Naive thymus-derived CD4-positive, alpha-beta T cell (primary cell): ENCODE measurements at regions of chr22 and their contacts with region 1.

Region 1: GRCh38 chr22:35627264-35628041 is 10.3 kb upstream of the MB start:
- DNase-seq: peak in 5 of 9 donors; percentile 14 to 49 (median 34)
- ATAC-seq: peak; percentile 42
- H3K4me3 ChIP-seq: peak overlapping the region; percentile 55
- H3K4me3 Mint-ChIP-seq: peak overlapping the region; percentile 53 to 86 (median 73)
- H3K27ac ChIP-seq: no peak overlapping the region
- H3K27ac Mint-ChIP-seq: peak overlapping the region in 7 of 9 donors; percentile 28 to 93 (median 64)
- H3K4me1 ChIP-seq: peaks cover 0 to 10% of the 10 kb centered on the region in 2 donors
- H3K4me1 Mint-ChIP-seq: peaks cover 8 to 30% (median 28%) of the 10 kb centered on the region in 7 donors
- H3K27me3 ChIP-seq: no peaks in the 10 kb centered on the region
- H3K27me3 Mint-ChIP-seq: peaks cover 0 to 14% (median 8%) of the 10 kb centered on the region in 5 donors

Region 2: DNA sequence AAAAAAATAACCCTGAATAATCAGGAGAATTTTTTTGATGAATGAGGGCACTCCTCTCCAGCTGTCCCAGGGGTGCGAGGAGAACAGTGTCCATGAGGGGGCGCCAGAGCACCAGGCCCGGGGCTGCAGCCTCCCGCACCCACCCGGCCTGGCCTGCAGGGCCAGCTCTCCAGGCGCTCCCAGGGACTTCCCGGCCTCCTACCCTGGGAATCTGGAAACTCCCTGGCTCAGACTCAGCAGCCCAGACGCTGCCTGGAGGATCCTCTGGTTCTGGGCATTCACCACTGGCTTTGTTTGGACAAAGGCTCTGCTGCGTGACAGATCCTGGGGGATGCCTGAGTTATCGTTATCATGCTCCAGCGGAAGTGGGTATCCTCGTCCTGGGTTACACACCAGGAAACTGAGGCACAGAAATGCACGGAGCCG is 196.5 kb before region 1 on chr22:
- CTCF ChIA-PET with region 1: no interaction called
- POLR2A ChIA-PET with region 1: no interaction called
- intact Hi-C with region 1: loop called (anchors 1 to 2 kb)
- DNase-seq: peak; percentile 30 to 74 (median 59)
- ATAC-seq: peak; percentile 83
- H3K4me3 ChIP-seq: no peak overlapping the region
- H3K4me3 Mint-ChIP-seq: no peak overlapping the region
- H3K27ac ChIP-seq: no peak overlapping the region
- H3K27ac Mint-ChIP-seq: no peak overlapping the region
- H3K4me1 ChIP-seq: no peaks in the 10 kb centered on the region
- H3K4me1 Mint-ChIP-seq: peaks cover 0 to 3% (median 0%) of the 10 kb centered on the region in 7 donors
- H3K27me3 ChIP-seq: no peaks in the 10 kb centered on the region
- H3K27me3 Mint-ChIP-seq: no peaks in the 10 kb centered on the region

Region 3: GRCh38 chr22:35697142-35697541 is 69.7 kb after region 1 on chr22:
- CTCF ChIA-PET with region 1: no interaction called
- POLR2A ChIA-PET with region 1: no interaction called
- intact Hi-C with region 1: no loop called
- DNase-seq: peak in 6 of 9 donors; percentile 19 to 61 (median 30)
- ATAC-seq: no peak
- H3K4me3 ChIP-seq: no peak overlapping the region
- H3K4me3 Mint-ChIP-seq: no peak overlapping the region
- H3K27ac ChIP-seq: no peak overlapping the region
- H3K27ac Mint-ChIP-seq: no peak overlapping the region
- H3K4me1 ChIP-seq: no peaks in the 10 kb centered on the region
- H3K4me1 Mint-ChIP-seq: no peaks in the 10 kb centered on the region
- H3K27me3 ChIP-seq: no peaks in the 10 kb centered on the region
- H3K27me3 Mint-ChIP-seq: no peaks in the 10 kb centered on the region

Region 4: DNA sequence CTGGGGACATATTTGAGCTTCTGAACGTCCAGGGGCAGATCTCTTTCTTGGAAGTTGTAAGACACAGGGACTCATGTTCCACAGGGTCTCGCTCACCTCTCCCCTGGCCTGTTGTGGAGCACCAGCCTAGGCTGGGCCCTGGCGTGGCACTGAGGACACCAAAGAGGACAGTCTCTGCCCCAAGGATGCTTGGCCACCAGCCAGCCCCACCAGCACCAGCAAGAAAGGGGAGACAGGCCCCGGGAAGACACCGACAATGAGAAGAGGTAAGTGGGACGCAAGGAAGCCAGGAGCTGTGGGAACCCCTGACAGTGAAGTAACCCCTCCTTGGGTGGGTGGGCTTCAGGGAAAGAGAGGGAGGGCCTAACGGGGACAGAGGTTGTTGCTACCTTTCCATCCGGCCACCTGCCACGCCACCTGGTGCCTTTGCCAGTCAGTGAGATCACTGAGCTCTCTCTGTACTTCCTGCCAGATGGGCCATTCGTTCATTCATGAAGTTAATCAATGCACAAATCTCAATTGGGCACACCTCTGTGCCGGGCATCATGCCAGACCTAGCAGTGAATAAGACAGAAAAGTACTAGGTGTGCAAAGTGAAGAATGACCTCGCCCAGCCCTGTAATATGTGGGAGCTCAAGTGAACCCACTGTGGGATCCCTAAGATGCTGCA is 101.3 kb after region 1 on chr22:
- CTCF ChIA-PET with region 1: no interaction called
- POLR2A ChIA-PET with region 1: no interaction called
- intact Hi-C with region 1: no loop called
- DNase-seq: no peak
- ATAC-seq: no peak
- H3K4me3 ChIP-seq: no peak overlapping the region
- H3K4me3 Mint-ChIP-seq: no peak overlapping the region
- H3K27ac ChIP-seq: no peak overlapping the region
- H3K27ac Mint-ChIP-seq: no peak overlapping the region
- H3K4me1 ChIP-seq: no peaks in the 10 kb centered on the region
- H3K4me1 Mint-ChIP-seq: peaks cover 0 to 2% (median 0%) of the 10 kb centered on the region in 7 donors
- H3K27me3 ChIP-seq: no peaks in the 10 kb centered on the region
- H3K27me3 Mint-ChIP-seq: peaks cover 0 to 17% (median 0%) of the 10 kb centered on the region in 5 donors

Region 5: GRCh38 chr22:35739076-35739930 is 111.8 kb after region 1 on chr22:
- CTCF ChIA-PET with region 1: no interaction called
- POLR2A ChIA-PET with region 1: no interaction called
- intact Hi-C with region 1: loop called in 1 of 2 experiments (anchors 1 kb)
- DNase-seq: peak in 2 of 9 donors; percentile 2 to 5
- ATAC-seq: no peak
- H3K4me3 ChIP-seq: no peak overlapping the region
- H3K4me3 Mint-ChIP-seq: peak overlapping the region in 1 of 10 donors; percentile 11
- H3K27ac ChIP-seq: no peak overlapping the region
- H3K27ac Mint-ChIP-seq: no peak overlapping the region
- H3K4me1 ChIP-seq: no peaks in the 10 kb centered on the region
- H3K4me1 Mint-ChIP-seq: peaks cover 0 to 1% (median 0%) of the 10 kb centered on the region in 7 donors
- H3K27me3 ChIP-seq: no peaks in the 10 kb centered on the region
- H3K27me3 Mint-ChIP-seq: peaks cover 0 to 4% (median 0%) of the 10 kb centered on the region in 5 donors

Region 6: GRCh38 chr22:35840302-35840739 is 212.9 kb after region 1 on chr22:
- CTCF ChIA-PET with region 1: no interaction called
- POLR2A ChIA-PET with region 1: no interaction called
- intact Hi-C with region 1: loop called (anchors 10 kb)
- DNase-seq: peak in 1 of 9 donors; percentile 3
- ATAC-seq: no peak
- H3K4me3 ChIP-seq: no peak overlapping the region
- H3K4me3 Mint-ChIP-seq: peak overlapping the region in 3 of 10 donors; percentile 21 to 28 (median 24)
- H3K27ac ChIP-seq: no peak overlapping the region
- H3K27ac Mint-ChIP-seq: no peak overlapping the region
- H3K4me1 ChIP-seq: peaks cover 0 to 4% of the 10 kb centered on the region in 2 donors
- H3K4me1 Mint-ChIP-seq: peaks cover 0 to 12% (median 10%) of the 10 kb centered on the region in 7 donors
- H3K27me3 ChIP-seq: no peaks in the 10 kb centered on the region
- H3K27me3 Mint-ChIP-seq: peaks cover 13 to 41% (median 26%) of the 10 kb centered on the region in 5 donors

Region 7: DNA sequence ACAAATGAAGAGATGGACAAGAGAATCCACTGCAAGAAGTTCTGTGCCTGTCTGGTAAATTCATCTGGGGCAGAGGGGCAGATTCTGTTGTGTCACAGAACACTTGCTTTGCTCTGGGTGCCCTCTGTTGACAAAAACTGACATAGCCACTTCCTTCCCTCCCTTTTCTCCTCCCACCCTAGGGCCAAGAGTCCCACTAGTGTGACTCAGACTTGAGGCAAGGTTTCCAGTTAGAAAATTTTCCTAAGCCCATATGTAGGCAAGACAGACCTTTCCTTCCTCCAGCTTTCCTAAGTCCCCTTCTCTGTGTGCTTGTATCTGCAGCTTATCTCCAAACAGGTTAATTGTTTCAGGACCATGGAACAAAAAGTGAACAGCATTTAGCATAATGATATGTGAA is 294.3 kb after region 1 on chr22:
- CTCF ChIA-PET with region 1: interaction called, 8 read pairs
- POLR2A ChIA-PET with region 1: no interaction called
- intact Hi-C with region 1: loop called (anchors 1 kb)
- DNase-seq: peak in 6 of 9 donors; percentile 21 to 36 (median 30)
- ATAC-seq: peak; percentile 49
- H3K4me3 ChIP-seq: no peak overlapping the region
- H3K4me3 Mint-ChIP-seq: no peak overlapping the region
- H3K27ac ChIP-seq: no peak overlapping the region
- H3K27ac Mint-ChIP-seq: peak overlapping the region in 1 of 9 donors; percentile 4
- H3K4me1 ChIP-seq: no peaks in the 10 kb centered on the region
- H3K4me1 Mint-ChIP-seq: peaks cover 0 to 5% (median 0%) of the 10 kb centered on the region in 7 donors
- H3K27me3 ChIP-seq: no peaks in the 10 kb centered on the region
- H3K27me3 Mint-ChIP-seq: peaks cover 0 to 4% (median 0%) of the 10 kb centered on the region in 5 donors

Region 8: DNA sequence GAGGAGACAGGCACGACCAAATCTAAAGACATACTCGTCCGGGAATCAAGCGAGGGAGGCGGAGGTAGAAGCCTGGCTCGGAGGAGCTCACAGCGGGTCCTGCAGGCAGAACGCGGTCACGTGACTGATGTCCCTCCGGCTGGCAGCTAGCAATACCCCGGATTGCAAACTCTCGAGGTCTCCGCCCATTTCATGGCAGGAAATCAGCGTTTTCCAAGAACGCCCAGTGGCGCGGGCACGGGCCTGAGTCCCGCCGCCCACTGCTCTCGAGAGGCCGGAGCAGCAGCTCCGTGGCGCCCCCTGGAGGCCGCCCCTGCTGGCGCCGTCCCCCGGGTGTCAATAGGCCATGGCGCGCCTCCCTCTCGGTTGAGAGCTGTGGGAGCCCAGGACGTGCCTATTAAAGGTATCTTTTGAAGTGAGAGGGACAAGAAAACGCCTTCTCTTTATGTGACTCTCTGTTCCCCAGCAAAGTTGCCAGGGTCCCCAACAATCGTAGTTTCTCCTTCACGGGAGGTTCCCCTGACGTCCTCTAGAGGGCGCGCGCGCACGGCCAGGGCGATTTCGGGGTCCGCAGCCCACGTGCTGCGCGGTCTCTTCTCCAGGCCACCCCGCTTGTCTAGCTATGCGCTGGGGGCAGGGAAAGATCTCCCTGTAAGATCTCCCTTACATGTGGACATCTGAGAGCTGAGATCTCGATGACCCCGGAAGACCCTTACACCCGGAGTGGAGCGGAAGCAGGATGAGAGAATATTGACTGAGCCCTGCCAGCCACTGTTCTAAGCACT is 438.5 kb after region 1 on chr22:
- CTCF ChIA-PET with region 1: no interaction called
- POLR2A ChIA-PET with region 1: no interaction called
- intact Hi-C with region 1: loop called in 1 of 2 experiments (anchors 1 kb)
- DNase-seq: peak; percentile 35 to 80 (median 56)
- ATAC-seq: peak; percentile 88
- H3K4me3 ChIP-seq: peak overlapping the region; percentile 72
- H3K4me3 Mint-ChIP-seq: peak overlapping the region; percentile 80 to 92 (median 87)
- H3K27ac ChIP-seq: peak overlapping the region; percentile 21
- H3K27ac Mint-ChIP-seq: peak overlapping the region in 7 of 9 donors; percentile 14 to 89 (median 58)
- H3K4me1 ChIP-seq: peaks cover 6 to 8% of the 10 kb centered on the region in 2 donors
- H3K4me1 Mint-ChIP-seq: peaks cover 4 to 10% (median 8%) of the 10 kb centered on the region in 7 donors
- H3K27me3 ChIP-seq: no peaks in the 10 kb centered on the region
- H3K27me3 Mint-ChIP-seq: peaks cover 0 to 11% (median 0%) of the 10 kb centered on the region in 5 donors